ENCODE measurements at regions of chr3 and their contacts with region 1.

Region 1: DNA sequence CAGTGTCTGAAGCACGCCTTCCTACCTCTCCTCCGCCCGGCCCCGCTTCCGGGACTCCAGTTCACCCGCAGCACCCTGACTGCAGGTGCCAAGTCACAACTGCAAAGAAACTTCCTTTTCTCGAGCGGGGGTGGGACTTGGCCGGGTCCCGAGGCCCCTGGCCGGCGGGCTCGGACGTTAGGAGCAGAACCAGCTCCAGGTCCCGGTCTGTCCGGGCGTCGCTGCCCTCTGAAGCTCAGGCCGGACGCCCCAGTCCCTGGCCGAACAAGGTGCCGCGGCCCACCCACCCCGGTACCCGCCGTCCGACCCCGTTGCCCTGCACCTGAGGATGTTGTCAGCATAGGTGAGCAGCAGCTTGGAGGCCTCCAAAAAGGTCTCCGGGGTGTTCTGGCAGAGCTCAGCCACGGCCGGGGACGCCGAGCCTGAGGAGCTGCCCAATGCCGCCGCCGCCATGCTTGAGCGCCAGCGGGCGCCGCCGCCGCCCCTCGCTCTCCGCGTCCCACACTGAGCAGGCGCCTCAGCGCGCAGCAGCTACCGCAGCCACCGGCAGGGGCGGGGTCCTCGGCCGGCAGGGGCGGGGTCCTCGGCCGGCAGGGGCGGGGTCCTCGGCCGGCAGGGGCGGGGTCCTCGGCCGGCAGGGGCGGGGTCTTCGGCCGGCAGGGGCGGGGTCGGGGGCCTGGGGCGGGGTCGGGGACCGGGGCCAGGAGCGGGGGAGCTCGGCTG is at the start of gene NGLY1:
- DNase-seq: peak; percentile 87
- CTCF ChIP-seq: no peak

Region 2: DNA sequence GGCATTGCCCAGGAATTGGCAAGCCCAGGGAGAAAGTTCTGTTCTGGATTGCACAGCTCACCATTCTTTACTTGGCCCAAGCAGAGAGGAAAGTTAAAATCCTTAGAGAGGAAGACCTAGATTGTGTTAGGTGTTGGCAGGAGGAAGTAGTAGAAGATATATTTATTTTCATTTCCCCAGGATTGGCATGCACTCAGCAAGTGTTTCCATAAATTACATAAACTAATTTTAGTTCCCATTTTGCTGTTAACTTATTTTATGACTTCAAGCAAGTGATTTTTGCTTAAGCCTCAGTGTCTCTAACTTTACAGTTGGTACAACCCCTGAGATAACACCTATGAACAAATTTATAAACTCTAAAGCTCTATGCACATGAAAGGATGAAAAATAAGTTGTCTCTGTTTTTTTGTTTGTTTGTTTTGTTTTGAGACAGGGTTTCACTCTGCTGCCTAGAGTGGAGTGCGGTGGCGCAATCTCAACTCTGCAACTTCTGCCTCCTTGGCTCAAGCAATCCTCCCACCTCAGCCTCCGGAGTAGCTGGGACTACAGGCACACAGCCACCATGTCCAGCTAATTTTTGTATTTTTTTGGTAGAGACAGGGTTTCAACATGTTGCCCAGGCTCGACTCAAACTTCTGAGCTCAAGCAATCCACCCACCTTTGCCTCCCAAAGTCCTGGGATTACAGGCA is 87.2 kb before region 1 on chr3:
- CTCF ChIA-PET with region 1: no interaction called
- POLR2A ChIA-PET with region 1: no interaction called
- DNase-seq: no peak
- CTCF ChIP-seq: no peak

Region 3: DNA sequence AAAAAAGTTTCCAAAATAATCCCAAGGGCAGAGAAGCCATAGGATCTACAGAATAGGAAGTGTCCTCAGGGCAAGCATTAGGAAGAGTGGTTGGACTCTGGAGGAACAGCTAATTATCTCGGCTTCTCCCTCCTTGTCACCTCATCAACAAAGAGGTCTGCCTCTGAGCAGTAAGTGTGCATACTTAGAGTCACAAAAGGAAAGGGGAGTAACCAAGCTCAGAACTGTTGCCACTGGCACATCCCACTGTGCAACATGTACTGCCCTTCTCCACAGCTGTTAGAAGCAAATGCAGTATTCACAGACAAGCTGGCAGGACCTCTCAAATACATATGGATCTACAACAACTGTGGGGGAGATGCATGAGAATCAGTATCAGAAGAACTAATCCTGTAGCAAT is 31.4 kb before region 1 on chr3:
- CTCF ChIA-PET with region 1: no interaction called
- POLR2A ChIA-PET with region 1: no interaction called
- DNase-seq: no peak
- CTCF ChIP-seq: no peak

Region 4: DNA sequence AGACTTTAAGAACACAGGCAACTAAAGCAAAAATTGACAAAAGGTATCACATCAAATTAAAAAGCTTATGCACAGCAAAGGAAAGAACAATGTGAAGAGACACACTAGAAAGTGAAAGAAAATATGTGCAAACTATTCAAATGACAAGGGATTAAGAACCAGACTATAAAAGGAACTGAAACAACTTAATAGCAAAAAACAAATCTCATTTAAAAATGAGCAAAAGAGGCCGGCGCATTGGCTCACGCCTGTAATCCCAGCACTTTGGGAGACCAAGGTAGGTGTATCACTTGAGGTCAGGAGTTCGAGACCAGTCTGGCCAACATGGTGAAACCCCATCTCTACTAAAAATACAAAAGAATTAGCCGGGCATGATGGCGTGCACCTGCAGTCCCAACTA is 14.2 kb before region 1 on chr3:
- CTCF ChIA-PET with region 1: interaction called, 10 read pairs
- POLR2A ChIA-PET with region 1: interaction called, 3 read pairs
- DNase-seq: peak; percentile 20
- CTCF ChIP-seq: no peak

Measured in GM10248 (cell line).